WTC11 (cell line): ENCODE measurements at regions of chr11 and their contacts with region 1.

Region 1: DNA sequence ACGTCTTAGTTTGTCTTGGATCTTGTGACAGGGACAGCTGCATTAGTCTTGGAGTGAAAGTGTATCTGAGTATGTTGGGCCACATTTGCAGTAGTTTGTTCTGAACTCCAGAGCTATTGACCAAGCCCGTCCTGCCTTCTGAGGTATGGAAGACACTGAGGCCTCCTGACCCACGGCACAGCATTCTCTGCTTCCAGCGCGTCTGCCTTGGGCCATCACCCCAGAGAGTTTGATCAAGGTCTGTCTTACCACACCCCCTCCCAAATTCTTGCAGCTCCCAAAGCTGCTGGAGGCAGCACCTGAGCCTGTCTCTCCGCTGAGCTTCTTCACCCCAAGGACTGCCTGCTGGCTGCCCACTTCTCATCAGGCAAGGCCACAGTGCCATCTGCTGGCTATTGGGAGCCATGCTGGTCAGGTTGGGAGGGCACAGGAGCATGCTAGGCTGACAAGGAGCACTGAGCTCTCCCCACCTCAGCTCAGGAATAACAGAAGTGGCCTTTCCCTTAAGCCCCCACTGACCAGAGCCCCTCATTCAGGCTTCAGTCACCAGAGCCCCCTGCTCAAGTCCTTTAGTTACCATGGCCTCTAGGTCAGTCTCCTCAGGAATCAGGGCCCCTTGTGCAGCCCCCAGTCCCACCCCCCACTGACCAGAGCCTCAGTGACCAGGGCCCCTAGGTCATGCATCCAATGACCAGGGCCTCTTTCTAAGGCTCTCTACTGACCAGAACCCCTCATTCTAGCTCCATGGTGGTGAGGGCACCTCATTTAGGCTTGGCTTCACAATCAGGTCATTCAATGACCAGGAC is 27.2 kb upstream of the SMPD1 start:
- DNase-seq: peak; percentile 89
- ATAC-seq: peak; percentile 99
- H3K4me3 Mint-ChIP-seq: no peak overlapping the region
- H3K27ac Mint-ChIP-seq: no peak overlapping the region
- H3K4me1 Mint-ChIP-seq: peaks cover 4% of the 10 kb centered on the region; the same call in 1 of the 2 replicates
- H3K27me3 Mint-ChIP-seq: no peaks in the 10 kb centered on the region
- CTCF ChIP-seq: peak; percentile 76

Region 2: GRCh38 chr11:6234387-6235107 is 128.5 kb before region 1 on chr11 and contains the start of gene FHIP1B:
- CTCF ChIA-PET with region 1: interaction called, 39 read pairs
- POLR2A ChIA-PET with region 1: no interaction called
- DNase-seq: peak; percentile 100
- ATAC-seq: peak; percentile 97
- H3K4me3 Mint-ChIP-seq: peak within 1 kb of the TSS; percentile 100
- H3K27ac Mint-ChIP-seq: peak within 1 kb of the TSS; percentile 96
- H3K4me1 Mint-ChIP-seq: peaks cover 13% of the 10 kb centered on the region
- H3K27me3 Mint-ChIP-seq: no peaks in the 10 kb centered on the region
- CTCF ChIP-seq: no peak
- total RNA-seq, gene FHIP1B: 22.2 to 24.8 TPM (median 23.6 TPM) in 3 replicates

Region 3: GRCh38 chr11:6285019-6285418 is 78.1 kb before region 1 on chr11:
- CTCF ChIA-PET with region 1: interaction called, 21 read pairs
- POLR2A ChIA-PET with region 1: no interaction called
- DNase-seq: no peak
- ATAC-seq: no peak
- H3K4me3 Mint-ChIP-seq: no peak overlapping the region
- H3K27ac Mint-ChIP-seq: no peak overlapping the region
- H3K4me1 Mint-ChIP-seq: peaks cover 31% of the 10 kb centered on the region
- H3K27me3 Mint-ChIP-seq: peaks cover 98% of the 10 kb centered on the region
- CTCF ChIP-seq: no peak

Region 4: DNA sequence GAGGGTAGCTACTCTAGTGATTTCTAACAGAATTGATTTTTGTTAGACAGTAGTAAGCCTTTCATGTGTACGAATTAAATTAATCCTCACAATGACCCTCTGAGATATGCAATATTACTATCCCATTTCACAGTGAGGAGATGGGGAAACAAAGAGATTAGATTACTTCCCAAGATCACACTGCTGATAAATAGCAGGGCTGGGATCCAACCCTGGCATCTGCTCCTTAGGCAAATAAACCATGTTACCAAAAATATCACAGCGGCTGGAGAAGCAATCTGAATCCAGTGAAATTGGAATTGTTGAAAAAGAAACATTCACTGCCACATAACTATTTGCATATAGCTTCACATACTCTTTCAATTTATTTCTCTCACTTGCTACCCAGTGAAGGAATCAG is 30.0 kb before region 1 on chr11:
- CTCF ChIA-PET with region 1: interaction called, 20 read pairs
- POLR2A ChIA-PET with region 1: no interaction called
- DNase-seq: no peak
- ATAC-seq: no peak
- H3K4me3 Mint-ChIP-seq: no peak overlapping the region
- H3K27ac Mint-ChIP-seq: no peak overlapping the region
- H3K4me1 Mint-ChIP-seq: peaks cover 18% of the 10 kb centered on the region
- H3K27me3 Mint-ChIP-seq: no peaks in the 10 kb centered on the region
- CTCF ChIP-seq: no peak

Region 5: GRCh38 chr11:6419009-6419631 is 56.0 kb after region 1 on chr11 and contains the start of gene APBB1:
- CTCF ChIA-PET with region 1: interaction called, 11 read pairs
- POLR2A ChIA-PET with region 1: no interaction called
- DNase-seq: peak; percentile 68
- ATAC-seq: peak; percentile 78
- H3K4me3 Mint-ChIP-seq: peak within 1 kb of the TSS; percentile 72
- H3K27ac Mint-ChIP-seq: no peak within 1 kb of the TSS
- H3K4me1 Mint-ChIP-seq: peaks cover 3% of the 10 kb centered on the region
- H3K27me3 Mint-ChIP-seq: peaks cover 43% of the 10 kb centered on the region
- CTCF ChIP-seq: no peak
- total RNA-seq, gene APBB1: 32.1 to 33.1 TPM (median 32.7 TPM) in 3 replicates

Region 6: GRCh38 chr11:6505577-6506240 is 142.6 kb after region 1 on chr11:
- CTCF ChIA-PET with region 1: interaction called, 15 read pairs
- POLR2A ChIA-PET with region 1: no interaction called
- DNase-seq: no peak
- ATAC-seq: peak; percentile 89
- H3K4me3 Mint-ChIP-seq: no peak overlapping the region
- H3K27ac Mint-ChIP-seq: peak overlapping the region; percentile 8; the same call in 1 of the 2 replicates
- H3K4me1 Mint-ChIP-seq: no peaks in the 10 kb centered on the region
- H3K27me3 Mint-ChIP-seq: no peaks in the 10 kb centered on the region
- CTCF ChIP-seq: peak; percentile 53; the same call in 1 of the 2 replicates